Activated CD4-positive, alpha-beta T cell treated with anti-CD3 and anti-CD28 coated beads for 36 hours (primary cell): ENCODE measurements at regions of chr1 and their contacts with region 1.

Region 1: DNA sequence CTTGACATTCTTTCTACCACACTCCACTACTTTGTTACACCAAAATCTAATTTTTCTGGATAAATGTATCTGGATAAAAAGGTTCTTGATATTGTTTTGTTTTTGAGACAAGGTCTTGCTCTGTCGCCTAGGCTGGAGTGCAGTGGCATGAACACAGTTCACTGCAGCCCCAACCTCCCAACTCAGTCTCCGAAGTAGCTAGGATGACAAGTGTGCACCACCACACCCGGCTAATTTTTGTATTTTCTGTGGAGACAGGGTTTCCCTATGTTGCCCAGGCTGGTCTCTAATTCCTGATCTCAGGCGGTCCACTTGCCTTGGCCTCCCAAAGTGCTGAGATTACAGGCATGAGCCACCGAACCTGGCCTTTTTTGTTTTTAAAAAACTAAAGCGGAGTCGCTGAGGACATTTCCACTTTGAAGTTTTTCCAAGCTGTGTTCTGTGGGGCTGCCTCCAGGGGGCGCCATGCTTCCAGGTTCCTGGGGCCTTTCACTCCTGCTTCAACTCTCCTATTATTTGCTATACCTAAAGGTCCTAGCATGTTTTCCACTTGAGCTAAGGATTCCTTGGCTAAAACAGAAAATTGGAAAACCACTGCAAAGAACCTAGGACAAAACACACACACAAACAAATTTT is 14.1 kb upstream of the NCMAP start:
- DNase-seq: peak; percentile 68
- ATAC-seq: no peak
- H3K4me3 Mint-ChIP-seq: peak overlapping the region; percentile 48
- H3K27ac Mint-ChIP-seq: peak overlapping the region; percentile 93
- H3K4me1 Mint-ChIP-seq: peaks cover 69% of the 10 kb centered on the region
- H3K27me3 Mint-ChIP-seq: no peaks in the 10 kb centered on the region

Region 2: GRCh38 chr1:24266398-24266941 is 275.4 kb before region 1 on chr1:
- CTCF ChIA-PET with region 1: no interaction called
- POLR2A ChIA-PET with region 1: no interaction called
- intact Hi-C with region 1: no loop called
- DNase-seq: no peak
- ATAC-seq: no peak
- H3K4me3 Mint-ChIP-seq: no peak overlapping the region
- H3K27ac Mint-ChIP-seq: no peak overlapping the region
- H3K4me1 Mint-ChIP-seq: no peaks in the 10 kb centered on the region
- H3K27me3 Mint-ChIP-seq: peaks cover 13% of the 10 kb centered on the region

Region 3: DNA sequence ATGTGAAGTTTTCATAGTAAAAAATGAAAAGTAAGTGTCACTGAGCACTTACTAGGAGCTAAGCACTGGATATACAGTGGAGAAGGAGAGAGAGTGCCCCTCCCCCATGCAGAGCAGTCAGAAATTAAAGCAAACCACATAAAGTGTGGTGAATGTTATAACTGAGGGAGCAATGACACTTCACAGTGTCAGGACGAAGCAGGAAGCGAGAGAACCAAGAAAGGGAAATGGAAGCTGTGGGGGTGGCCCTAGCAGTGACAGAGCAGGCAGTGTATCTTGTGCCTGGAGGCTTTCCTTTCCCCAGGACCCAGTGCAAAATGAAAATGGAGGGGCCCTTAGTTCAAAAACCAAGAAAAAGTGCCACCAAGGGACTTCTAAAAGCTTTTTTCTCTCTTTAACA is 60.7 kb before region 1 on chr1:
- CTCF ChIA-PET with region 1: interaction called, 9 read pairs
- POLR2A ChIA-PET with region 1: interaction called, 7 read pairs
- intact Hi-C with region 1: loop called (anchors 1 to 2 kb)
- DNase-seq: peak; percentile 81
- ATAC-seq: peak; percentile 76
- H3K4me3 Mint-ChIP-seq: peak overlapping the region; percentile 60
- H3K27ac Mint-ChIP-seq: peak overlapping the region; percentile 97
- H3K4me1 Mint-ChIP-seq: peaks cover 65% of the 10 kb centered on the region
- H3K27me3 Mint-ChIP-seq: no peaks in the 10 kb centered on the region

Region 4: DNA sequence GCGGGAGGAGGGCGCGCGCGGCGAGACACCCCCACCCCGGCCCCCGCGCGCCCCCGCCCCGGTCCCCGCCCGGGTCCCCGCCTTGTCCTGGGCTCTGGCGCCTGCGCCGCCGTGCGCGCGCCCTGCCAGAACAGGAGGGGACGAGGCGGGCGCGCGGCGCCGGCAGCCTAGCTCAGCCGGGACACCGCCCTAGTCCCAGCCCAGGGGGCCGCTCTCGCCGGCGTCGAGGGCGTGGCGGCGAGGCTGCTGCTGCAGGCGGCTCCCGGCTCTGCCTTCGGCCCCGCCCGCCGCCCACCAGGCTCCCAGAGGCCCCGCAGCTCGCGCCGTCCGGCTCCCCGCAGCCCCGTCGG is 39.1 kb before region 1 on chr1 and contains the start of gene RCAN3:
- CTCF ChIA-PET with region 1: interaction called, 4 read pairs
- POLR2A ChIA-PET with region 1: interaction called, 6 read pairs
- intact Hi-C with region 1: loop called in 1 of 2 experiments (anchors 1 kb)
- DNase-seq: peak; percentile 95
- ATAC-seq: peak; percentile 75
- H3K4me3 Mint-ChIP-seq: peak within 1 kb of the TSS; percentile 86
- H3K27ac Mint-ChIP-seq: peak within 1 kb of the TSS; percentile 94
- H3K4me1 Mint-ChIP-seq: peaks cover 59% of the 10 kb centered on the region
- H3K27me3 Mint-ChIP-seq: no peaks in the 10 kb centered on the region
- total RNA-seq, gene RCAN3: 62.3 to 67.5 TPM

Region 5: GRCh38 chr1:24558902-24559791 is 17.3 kb after region 1 on chr1:
- CTCF ChIA-PET with region 1: interaction called, 4 read pairs
- POLR2A ChIA-PET with region 1: interaction called, 5 read pairs
- intact Hi-C with region 1: loop called in 1 of 2 experiments (anchors 1 kb)
- DNase-seq: no peak
- ATAC-seq: no peak
- H3K4me3 Mint-ChIP-seq: no peak overlapping the region
- H3K27ac Mint-ChIP-seq: no peak overlapping the region
- H3K4me1 Mint-ChIP-seq: peaks cover 4% of the 10 kb centered on the region
- H3K27me3 Mint-ChIP-seq: peaks cover 4% of the 10 kb centered on the region

Region 6: GRCh38 chr1:24978383-24979032 is 436.7 kb after region 1 on chr1:
- CTCF ChIA-PET with region 1: no interaction called
- POLR2A ChIA-PET with region 1: interaction called, 12 read pairs
- intact Hi-C with region 1: no loop called
- DNase-seq: peak; percentile 12
- ATAC-seq: peak; percentile 35
- H3K4me3 Mint-ChIP-seq: no peak overlapping the region
- H3K27ac Mint-ChIP-seq: peak overlapping the region; percentile 55
- H3K4me1 Mint-ChIP-seq: peaks cover 64% of the 10 kb centered on the region
- H3K27me3 Mint-ChIP-seq: no peaks in the 10 kb centered on the region